ENCODE measurements at regions of chr9 and their contacts with region 1.

Region 1: GRCh38 chr9:37582548-37583157 is 6.5 kb upstream of the FBXO10 start:
- DNase-seq: no peak
- ATAC-seq: peak; percentile 68 to 85 (median 73)
- H3K4me3 ChIP-seq: no peak overlapping the region
- H3K27ac ChIP-seq: no peak overlapping the region
- H3K4me1 ChIP-seq: no peaks in the 10 kb centered on the region
- H3K27me3 ChIP-seq: no peaks in the 10 kb centered on the region
- CTCF ChIP-seq: peak; percentile 80

Region 2: DNA sequence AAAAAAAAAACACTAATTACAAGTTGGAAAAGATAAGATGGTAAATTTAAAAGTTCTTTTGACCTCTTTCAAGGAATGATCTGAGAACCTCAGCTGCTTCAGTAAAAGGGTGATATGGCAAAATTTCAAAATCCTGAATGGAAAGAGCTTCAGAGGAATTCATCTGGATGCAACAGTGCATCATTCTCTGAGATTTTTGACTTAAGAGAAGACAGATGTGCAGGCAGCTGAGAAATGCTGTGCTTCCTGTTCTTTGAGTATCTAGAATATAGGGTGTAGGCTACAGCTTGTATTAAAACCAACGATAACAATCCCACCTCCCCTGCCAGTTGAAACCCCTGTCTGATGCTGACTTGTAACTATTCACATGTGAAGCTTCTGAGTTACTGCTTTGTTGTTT is 74.3 kb after region 1 on chr9:
- intact Hi-C with region 1: no loop called
- DNase-seq: no peak
- ATAC-seq: no peak
- H3K4me3 ChIP-seq: no peak overlapping the region
- H3K27ac ChIP-seq: no peak overlapping the region
- H3K4me1 ChIP-seq: no peaks in the 10 kb centered on the region
- H3K27me3 ChIP-seq: peaks cover 0 to 4% (median 0%) of the 10 kb centered on the region in 3 donors
- CTCF ChIP-seq: no peak

Region 3: GRCh38 chr9:37693260-37693659 is 110.6 kb after region 1 on chr9:
- intact Hi-C with region 1: loop called in 1 of 2 experiments (anchors 5 kb)
- DNase-seq: no peak
- ATAC-seq: peak; percentile 90 to 94 (median 92)
- H3K4me3 ChIP-seq: peak overlapping the region; percentile 63
- H3K27ac ChIP-seq: peak overlapping the region; percentile 81
- H3K4me1 ChIP-seq: peaks cover 9% of the 10 kb centered on the region
- H3K27me3 ChIP-seq: no peaks in the 10 kb centered on the region
- CTCF ChIP-seq: no peak